Natural killer cell (primary cell): ENCODE measurements at regions of chr3 and their contacts with region 1.

Region 1: GRCh38 chr3:114290911-114291901 is 2.6 kb upstream of the TIGIT start:
- DNase-seq: peak; percentile 86 to 93
- ATAC-seq: peak; percentile 78 to 91 (median 86)
- H3K4me3 ChIP-seq: peak overlapping the region; percentile 5
- H3K4me3 Mint-ChIP-seq: peak overlapping the region; percentile 80
- H3K27ac ChIP-seq: peak overlapping the region; percentile 95
- H3K27ac Mint-ChIP-seq: peak overlapping the region; percentile 92
- H3K4me1 ChIP-seq: peaks cover 57% of the 10 kb centered on the region
- H3K4me1 Mint-ChIP-seq: peaks cover 66 to 68% of the 10 kb centered on the region in 2 donors
- H3K27me3 ChIP-seq: no peaks in the 10 kb centered on the region
- H3K27me3 Mint-ChIP-seq: no peaks in the 10 kb centered on the region
- CTCF ChIP-seq: peak; percentile 95

Region 2: DNA sequence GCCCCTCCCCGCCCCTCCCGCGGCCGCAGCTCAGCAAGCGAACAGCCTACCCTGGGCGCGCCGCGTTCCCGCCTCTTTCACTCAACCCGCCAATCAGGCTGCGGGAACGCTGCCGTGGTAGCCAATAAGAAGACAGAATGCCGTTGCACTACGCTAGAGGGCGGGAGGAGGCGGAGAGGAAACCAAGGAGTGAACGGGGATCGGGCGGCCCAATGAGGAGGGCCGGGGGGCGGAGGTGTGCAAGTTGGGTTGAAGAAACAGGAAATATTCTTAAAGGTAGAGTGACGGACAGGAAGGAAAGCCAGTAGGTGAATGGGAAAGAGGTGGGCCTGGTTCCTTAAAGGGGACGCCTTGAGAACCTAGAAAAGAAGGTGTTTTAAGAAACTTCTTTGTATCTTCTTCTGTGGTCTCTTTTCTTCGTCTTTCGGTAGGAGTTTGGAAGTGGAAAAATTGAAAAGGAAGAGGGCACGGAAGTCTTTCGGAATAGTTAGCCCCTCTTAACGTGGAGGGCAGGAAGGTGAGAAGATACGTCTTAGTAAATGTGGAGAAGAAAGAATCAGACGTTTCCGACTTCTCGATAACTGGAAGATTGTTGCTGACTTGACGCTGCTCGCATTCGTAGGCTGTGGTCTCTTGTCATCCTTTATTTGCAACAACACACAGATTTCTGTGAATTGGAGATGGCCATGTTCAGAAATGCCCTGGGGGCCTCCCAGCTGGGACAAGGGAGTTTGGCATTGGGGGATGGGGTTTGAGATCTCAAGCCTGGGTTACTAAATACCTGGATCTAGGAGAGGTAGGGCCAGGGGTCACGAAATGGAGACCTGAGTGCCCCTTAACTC is 594.3 kb before region 1 on chr3:
- intact Hi-C with region 1: loop called (anchors 2 kb)
- DNase-seq: peak; percentile 99
- ATAC-seq: peak; percentile 86 to 95 (median 87)
- H3K4me3 ChIP-seq: peak overlapping the region; percentile 83
- H3K4me3 Mint-ChIP-seq: no peak overlapping the region
- H3K27ac ChIP-seq: peak overlapping the region; percentile 90
- H3K27ac Mint-ChIP-seq: no peak overlapping the region
- H3K4me1 ChIP-seq: peaks cover 9% of the 10 kb centered on the region
- H3K4me1 Mint-ChIP-seq: peaks cover 20 to 21% of the 10 kb centered on the region in 2 donors
- H3K27me3 ChIP-seq: no peaks in the 10 kb centered on the region
- H3K27me3 Mint-ChIP-seq: no peaks in the 10 kb centered on the region
- CTCF ChIP-seq: no peak

Region 3: GRCh38 chr3:114213627-114214541 is 77.3 kb before region 1 on chr3:
- intact Hi-C with region 1: loop called (anchors 1 kb)
- DNase-seq: peak; percentile 73 to 88
- ATAC-seq: peak; percentile 61 to 77 (median 63)
- H3K4me3 ChIP-seq: peak overlapping the region; percentile 46
- H3K4me3 Mint-ChIP-seq: no peak overlapping the region
- H3K27ac ChIP-seq: peak overlapping the region; percentile 97
- H3K27ac Mint-ChIP-seq: no peak overlapping the region
- H3K4me1 ChIP-seq: peaks cover 63% of the 10 kb centered on the region
- H3K4me1 Mint-ChIP-seq: no peaks in the 10 kb centered on the region
- H3K27me3 ChIP-seq: no peaks in the 10 kb centered on the region
- H3K27me3 Mint-ChIP-seq: no peaks in the 10 kb centered on the region
- CTCF ChIP-seq: peak; percentile 12

Region 4: GRCh38 chr3:114252954-114253353 is 38.3 kb before region 1 on chr3:
- intact Hi-C with region 1: no loop called
- DNase-seq: no peak
- ATAC-seq: no peak
- H3K4me3 ChIP-seq: no peak overlapping the region
- H3K4me3 Mint-ChIP-seq: no peak overlapping the region
- H3K27ac ChIP-seq: no peak overlapping the region
- H3K27ac Mint-ChIP-seq: peak overlapping the region; percentile 73 to 75
- H3K4me1 ChIP-seq: no peaks in the 10 kb centered on the region
- H3K4me1 Mint-ChIP-seq: peaks cover 15 to 20% of the 10 kb centered on the region in 2 donors
- H3K27me3 ChIP-seq: no peaks in the 10 kb centered on the region
- H3K27me3 Mint-ChIP-seq: no peaks in the 10 kb centered on the region
- CTCF ChIP-seq: no peak

Region 5: DNA sequence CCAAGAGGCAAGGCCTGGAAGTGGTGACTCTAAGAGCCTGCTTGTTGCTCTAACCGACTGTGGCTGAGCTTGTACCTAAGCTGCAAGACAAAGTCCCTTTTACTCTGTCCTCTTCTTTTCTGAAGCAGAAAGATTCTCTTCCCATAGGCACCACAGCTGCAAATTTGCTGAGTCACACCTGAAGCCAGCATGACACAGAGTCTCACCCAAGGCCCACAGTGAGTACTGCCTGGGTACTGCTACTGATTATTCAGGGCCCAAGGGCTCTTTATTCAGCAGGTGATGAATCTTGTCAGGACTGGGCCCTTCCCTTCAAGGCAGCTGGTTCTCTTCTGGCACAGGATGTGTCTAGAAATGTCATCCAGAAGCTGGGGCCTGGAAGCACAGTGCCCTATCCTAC is 16.3 kb before region 1 on chr3:
- intact Hi-C with region 1: loop called (anchors 2 kb)
- DNase-seq: no peak
- ATAC-seq: peak in 1 of 3 donors; percentile 32
- H3K4me3 ChIP-seq: no peak overlapping the region
- H3K4me3 Mint-ChIP-seq: no peak overlapping the region
- H3K27ac ChIP-seq: no peak overlapping the region
- H3K27ac Mint-ChIP-seq: peak overlapping the region; percentile 0
- H3K4me1 ChIP-seq: peaks cover 5% of the 10 kb centered on the region
- H3K4me1 Mint-ChIP-seq: peaks cover 47 to 50% of the 10 kb centered on the region in 2 donors
- H3K27me3 ChIP-seq: no peaks in the 10 kb centered on the region
- H3K27me3 Mint-ChIP-seq: no peaks in the 10 kb centered on the region
- CTCF ChIP-seq: no peak

Region 6: GRCh38 chr3:114323546-114324254 is 32.5 kb after region 1 on chr3:
- intact Hi-C with region 1: loop called (anchors 2 kb)
- DNase-seq: peak in 1 of 2 donors; percentile 46
- ATAC-seq: peak; percentile 87 to 92 (median 91)
- H3K4me3 ChIP-seq: no peak overlapping the region
- H3K4me3 Mint-ChIP-seq: peak overlapping the region; percentile 21
- H3K27ac ChIP-seq: peak overlapping the region; percentile 57
- H3K27ac Mint-ChIP-seq: peak overlapping the region; percentile 82 to 86
- H3K4me1 ChIP-seq: peaks cover 5% of the 10 kb centered on the region
- H3K4me1 Mint-ChIP-seq: peaks cover 49 to 52% of the 10 kb centered on the region in 2 donors
- H3K27me3 ChIP-seq: no peaks in the 10 kb centered on the region
- H3K27me3 Mint-ChIP-seq: no peaks in the 10 kb centered on the region
- CTCF ChIP-seq: no peak

Region 7: GRCh38 chr3:114389156-114389555 is 98.0 kb after region 1 on chr3:
- intact Hi-C with region 1: loop called (anchors 2 kb)
- DNase-seq: peak; percentile 35 to 58
- ATAC-seq: peak; percentile 81 to 98 (median 87)
- H3K4me3 ChIP-seq: no peak overlapping the region
- H3K4me3 Mint-ChIP-seq: peak overlapping the region; percentile 75
- H3K27ac ChIP-seq: peak overlapping the region; percentile 40
- H3K27ac Mint-ChIP-seq: peak overlapping the region; percentile 79 to 90
- H3K4me1 ChIP-seq: peaks cover 22% of the 10 kb centered on the region
- H3K4me1 Mint-ChIP-seq: peaks cover 37 to 46% of the 10 kb centered on the region in 2 donors
- H3K27me3 ChIP-seq: no peaks in the 10 kb centered on the region
- H3K27me3 Mint-ChIP-seq: no peaks in the 10 kb centered on the region
- CTCF ChIP-seq: no peak

Region 8: DNA sequence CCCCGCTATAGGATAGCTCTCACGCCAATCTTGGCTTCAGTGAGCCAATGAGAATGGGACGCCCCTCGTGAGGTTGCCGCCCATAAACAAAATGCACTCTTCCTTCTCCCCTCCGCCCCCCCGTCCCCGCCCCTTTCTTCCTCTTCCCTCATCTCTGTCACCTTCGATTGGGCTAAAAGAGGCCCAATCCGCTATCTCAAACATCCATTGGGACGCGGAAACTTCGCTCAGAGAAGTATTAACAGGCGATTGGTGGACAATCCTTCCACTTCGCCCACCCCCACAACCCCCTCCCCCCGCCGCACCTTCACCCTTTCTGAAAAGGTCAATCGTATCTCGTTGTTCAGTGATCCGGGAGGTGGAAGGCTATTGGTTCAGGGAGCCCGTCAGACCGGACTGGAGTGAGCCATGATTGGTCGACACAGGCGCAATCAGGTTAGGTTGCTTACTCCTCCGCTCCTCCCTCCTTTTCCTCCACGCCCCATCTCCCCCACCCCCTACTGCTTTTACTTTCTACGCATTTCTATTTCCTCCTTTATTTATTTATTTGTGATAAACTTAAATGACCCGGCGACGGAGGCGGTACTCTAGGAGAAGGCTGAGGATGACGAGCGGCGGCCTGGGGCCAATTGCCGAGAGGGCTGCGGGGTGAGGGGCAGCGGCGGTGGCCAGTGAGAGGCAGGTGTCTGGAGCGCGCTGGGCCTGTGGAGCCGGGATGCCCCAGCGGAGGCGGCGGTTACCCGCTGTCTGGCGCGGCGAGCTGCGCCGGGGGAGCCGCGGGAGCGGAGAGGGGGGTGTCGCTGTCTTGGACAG is 856.3 kb after region 1 on chr3:
- intact Hi-C with region 1: loop called (anchors 2 kb)
- DNase-seq: peak; percentile 92 to 100
- ATAC-seq: peak; percentile 71 to 87 (median 75)
- H3K4me3 ChIP-seq: peak overlapping the region; percentile 90
- H3K4me3 Mint-ChIP-seq: peak overlapping the region; percentile 93
- H3K27ac ChIP-seq: peak overlapping the region; percentile 96
- H3K27ac Mint-ChIP-seq: peak overlapping the region; percentile 90 to 99
- H3K4me1 ChIP-seq: peaks cover 10% of the 10 kb centered on the region
- H3K4me1 Mint-ChIP-seq: peaks cover 18 to 19% of the 10 kb centered on the region in 2 donors
- H3K27me3 ChIP-seq: no peaks in the 10 kb centered on the region
- H3K27me3 Mint-ChIP-seq: no peaks in the 10 kb centered on the region
- CTCF ChIP-seq: no peak